Ascending aorta (tissue), 2 donors: ENCODE measurements at regions of chr10 and their contacts with region 1.

Region 1: GRCh38 chr10:13787015-13787421 is 200.3 kb downstream of the PRPF18 start:
- DNase-seq: peak in 1 of 2 donors; percentile 66
- H3K4me3 ChIP-seq: no peak overlapping the region
- H3K27ac ChIP-seq: peak overlapping the region in 1 of 2 donors; percentile 8
- H3K4me1 ChIP-seq: peaks cover 6 to 14% of the 10 kb centered on the region in 2 donors
- H3K27me3 ChIP-seq: no peaks in the 10 kb centered on the region
- CTCF ChIP-seq: no peak

Region 2: GRCh38 chr10:14093730-14094484 is 306.9 kb after region 1 on chr10:
- intact Hi-C with region 1: loop called (anchors 2 kb)
- DNase-seq: no peak
- H3K4me3 ChIP-seq: no peak overlapping the region
- H3K27ac ChIP-seq: no peak overlapping the region
- H3K4me1 ChIP-seq: no peaks in the 10 kb centered on the region
- H3K27me3 ChIP-seq: no peaks in the 10 kb centered on the region
- CTCF ChIP-seq: peak in 2 of 3 experiments; percentile 33 to 44

Region 3: DNA sequence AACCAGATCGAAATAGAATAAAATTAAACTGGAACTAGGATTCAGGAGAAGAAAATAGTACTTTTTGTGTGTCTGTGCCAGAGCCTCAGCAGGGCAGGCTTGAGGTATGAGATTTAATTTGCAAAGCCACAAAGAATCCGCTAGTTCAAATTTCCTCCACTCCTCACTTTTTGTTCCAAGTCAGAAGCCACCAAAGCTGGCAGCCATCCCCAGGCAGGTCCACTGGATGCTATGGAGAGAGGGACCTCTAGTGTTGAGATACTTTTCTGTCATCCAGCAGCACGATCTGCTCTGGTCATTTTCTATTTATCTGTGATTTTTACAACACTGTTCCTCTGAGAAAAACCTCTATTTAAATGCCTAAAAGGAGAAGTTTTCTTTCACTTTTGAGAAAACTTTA is 691.6 kb after region 1 on chr10:
- intact Hi-C with region 1: loop called (anchors 10 kb)
- DNase-seq: no peak
- H3K4me3 ChIP-seq: no peak overlapping the region
- H3K27ac ChIP-seq: no peak overlapping the region
- H3K4me1 ChIP-seq: no peaks in the 10 kb centered on the region
- H3K27me3 ChIP-seq: no peaks in the 10 kb centered on the region
- CTCF ChIP-seq: peak in 2 of 3 experiments; percentile 29 to 72